ENCODE measurements at regions of chr17 and their contacts with region 1.

Region 1: GRCh38 chr17:51461578-51462004 is 201.2 kb downstream of the UTP18 start:
- H3K4me3 ChIP-seq: no peak overlapping the region
- H3K27ac ChIP-seq: no peak overlapping the region
- H3K4me1 ChIP-seq: no peaks in the 10 kb centered on the region
- CTCF ChIP-seq: peak; percentile 76; the same call in 1 of the 2 replicates

Region 2: DNA sequence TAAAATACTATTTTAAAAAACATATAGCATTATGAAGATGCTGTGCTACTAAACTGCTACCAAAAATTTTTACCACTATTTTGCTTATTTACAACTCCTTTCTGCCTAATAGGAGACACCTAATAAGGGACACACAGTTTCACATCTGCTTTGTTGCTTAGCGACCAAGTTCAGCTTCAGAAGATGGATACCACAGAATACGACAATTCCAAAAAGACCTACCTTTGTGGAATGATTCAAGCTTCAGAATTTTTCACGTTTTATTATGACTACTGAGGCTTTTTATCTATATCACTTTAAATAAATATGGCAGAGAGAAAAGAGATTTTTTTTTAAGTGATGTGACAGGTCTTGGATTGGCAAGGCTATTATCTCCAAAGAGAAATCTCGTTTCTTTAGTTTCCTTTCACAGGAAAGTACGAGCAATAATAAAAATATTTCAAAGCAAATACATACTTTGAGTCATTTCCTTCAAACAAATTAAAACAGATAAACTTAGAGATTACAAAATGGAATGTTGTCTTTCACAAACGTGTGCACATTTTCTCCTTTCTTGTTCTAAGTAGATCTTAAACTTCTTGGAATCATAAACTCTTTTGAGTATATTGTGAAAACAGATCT is 376.3 kb before region 1 on chr17:
- CTCF ChIA-PET with region 1: no interaction called
- POLR2A ChIA-PET with region 1: no interaction called
- H3K4me3 ChIP-seq: no peak overlapping the region
- H3K27ac ChIP-seq: no peak overlapping the region
- H3K4me1 ChIP-seq: peaks cover 5% of the 10 kb centered on the region
- CTCF ChIP-seq: no peak

Region 3: GRCh38 chr17:51435641-51436091 is 25.9 kb before region 1 on chr17:
- CTCF ChIA-PET with region 1: interaction called, 61 read pairs
- POLR2A ChIA-PET with region 1: no interaction called
- H3K4me3 ChIP-seq: no peak overlapping the region
- H3K27ac ChIP-seq: no peak overlapping the region
- H3K4me1 ChIP-seq: peaks cover 6% of the 10 kb centered on the region
- CTCF ChIP-seq: peak; percentile 80

Region 4: GRCh38 chr17:51472670-51473205 is 11.1 kb after region 1 on chr17:
- CTCF ChIA-PET with region 1: interaction called, 43 read pairs
- POLR2A ChIA-PET with region 1: interaction called, 3 read pairs
- H3K4me3 ChIP-seq: no peak overlapping the region
- H3K27ac ChIP-seq: no peak overlapping the region
- H3K4me1 ChIP-seq: no peaks in the 10 kb centered on the region
- CTCF ChIP-seq: no peak

Region 5: DNA sequence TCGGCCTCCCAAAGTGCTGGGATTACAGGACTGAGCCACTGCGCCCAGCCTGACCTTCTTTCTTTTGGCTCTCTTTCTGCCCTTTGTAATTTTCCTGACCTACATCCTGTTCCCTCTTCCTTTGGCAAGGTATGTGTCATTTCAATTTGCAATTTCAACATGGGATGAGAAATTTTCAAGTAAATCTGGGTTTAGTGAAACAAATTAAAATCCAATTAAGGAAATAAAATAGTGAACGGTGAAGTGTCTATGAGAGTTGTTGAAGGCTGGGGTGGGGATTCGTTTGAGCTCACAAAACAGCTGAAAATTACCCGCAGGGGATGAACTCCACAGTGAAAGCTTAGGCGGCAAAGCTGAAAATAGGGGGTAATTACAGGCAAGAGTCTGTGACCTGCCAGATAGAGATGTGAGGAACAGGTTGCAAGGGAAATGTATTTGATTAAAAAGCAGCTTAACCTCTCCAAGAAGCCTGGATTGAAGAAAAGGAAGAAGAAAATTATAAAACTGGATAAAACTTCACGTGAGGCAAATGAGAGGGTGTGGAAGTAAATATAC is 76.5 kb after region 1 on chr17:
- CTCF ChIA-PET with region 1: interaction called, 15 read pairs
- POLR2A ChIA-PET with region 1: no interaction called
- H3K4me3 ChIP-seq: no peak overlapping the region
- H3K27ac ChIP-seq: no peak overlapping the region
- H3K4me1 ChIP-seq: no peaks in the 10 kb centered on the region
- CTCF ChIP-seq: no peak

Region 6: DNA sequence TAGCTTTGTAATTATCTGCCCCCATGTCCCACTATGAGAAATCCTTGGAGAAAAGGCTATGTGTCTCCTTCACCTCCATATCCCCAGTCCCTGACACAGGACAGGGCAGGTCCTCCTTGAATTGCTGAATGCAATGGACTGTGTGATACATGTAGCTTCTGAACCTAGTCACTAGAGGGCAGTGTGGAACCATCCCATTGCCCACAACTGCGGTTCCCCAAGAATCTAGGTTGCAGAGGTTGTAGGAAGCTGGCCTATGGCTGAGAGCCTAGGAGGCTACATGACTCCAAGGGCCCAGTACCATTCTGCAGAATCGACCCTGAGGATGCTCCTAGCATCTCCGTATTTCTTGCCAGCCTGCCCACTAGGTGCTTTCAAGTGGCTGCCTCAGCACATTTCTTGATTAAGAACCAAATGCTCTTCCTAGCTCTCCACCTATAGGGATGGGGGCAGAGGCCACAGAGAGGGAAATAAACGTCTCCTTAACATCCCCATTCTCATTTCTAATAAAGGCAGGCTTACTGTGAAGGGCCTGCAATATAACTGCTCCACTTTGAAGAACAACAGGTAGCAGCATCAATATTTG is 302.9 kb after region 1 on chr17:
- CTCF ChIA-PET with region 1: interaction called, 12 read pairs
- POLR2A ChIA-PET with region 1: no interaction called
- H3K4me3 ChIP-seq: no peak overlapping the region
- H3K27ac ChIP-seq: no peak overlapping the region
- H3K4me1 ChIP-seq: no peaks in the 10 kb centered on the region
- CTCF ChIP-seq: peak; percentile 83

Measured in HEK293 (cell line).